Endothelial cell of umbilical vein (primary cell): ENCODE measurements at regions of chr1 and their contacts with region 1.

Region 1: DNA sequence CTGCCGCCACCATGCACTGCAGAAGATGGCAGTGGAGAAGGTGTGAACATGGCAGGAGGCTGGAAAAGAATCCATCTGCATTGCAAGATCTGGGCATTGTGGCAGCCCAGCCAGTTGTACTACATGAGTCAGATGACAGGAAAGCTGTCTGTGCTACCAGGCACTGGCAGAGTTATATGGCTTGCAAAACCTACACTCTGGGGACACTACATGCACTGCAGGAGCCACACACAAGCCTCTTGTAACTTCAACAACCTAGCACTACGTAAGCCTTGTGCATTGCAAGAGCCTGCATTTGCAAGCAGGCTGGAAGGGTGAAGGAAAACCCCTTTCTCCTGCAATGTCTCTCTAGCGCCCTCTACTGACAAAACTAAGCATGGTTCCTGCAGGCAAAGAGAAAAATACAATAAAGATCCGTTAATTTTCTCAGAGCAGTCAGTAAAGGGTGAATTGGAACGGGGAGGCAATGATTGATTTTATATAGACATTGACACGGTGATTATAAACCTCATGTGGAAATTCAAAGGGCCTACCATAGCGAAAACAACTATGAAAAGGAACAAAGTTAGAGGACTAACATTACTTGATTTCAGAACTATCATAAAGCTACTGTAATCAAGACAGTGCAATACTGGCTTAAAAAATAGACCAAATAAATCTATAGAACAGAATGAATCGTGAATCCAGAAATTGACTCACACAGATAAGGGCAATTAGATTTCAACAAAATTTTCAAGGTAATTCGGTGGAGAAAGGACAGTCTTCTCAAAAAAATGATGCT is 26.2 kb upstream of the DYNLT5 start:
- DNase-seq: peak; percentile 82
- H3K4me3 ChIP-seq: no peak overlapping the region
- H3K27ac ChIP-seq: no peak overlapping the region
- H3K4me1 ChIP-seq: peaks cover 31% of the 10 kb centered on the region
- H3K27me3 ChIP-seq: no peaks in the 10 kb centered on the region
- CTCF ChIP-seq: peak; percentile 83 to 84
- POLR2A ChIP-seq: no peak

Region 2: GRCh38 chr1:65958561-65959350 is 767.3 kb before region 1 on chr1:
- CTCF ChIA-PET with region 1: no interaction called
- POLR2A ChIA-PET with region 1: no interaction called
- dilution Hi-C with region 1: no loop called
- intact Hi-C with region 1: loop called (anchors 5 kb)
- DNase-seq: peak; percentile 73
- H3K4me3 ChIP-seq: no peak overlapping the region
- H3K27ac ChIP-seq: no peak overlapping the region
- H3K4me1 ChIP-seq: peaks cover 10% of the 10 kb centered on the region
- H3K27me3 ChIP-seq: no peaks in the 10 kb centered on the region
- CTCF ChIP-seq: peak; percentile 21 to 29
- POLR2A ChIP-seq: no peak

Region 3: DNA sequence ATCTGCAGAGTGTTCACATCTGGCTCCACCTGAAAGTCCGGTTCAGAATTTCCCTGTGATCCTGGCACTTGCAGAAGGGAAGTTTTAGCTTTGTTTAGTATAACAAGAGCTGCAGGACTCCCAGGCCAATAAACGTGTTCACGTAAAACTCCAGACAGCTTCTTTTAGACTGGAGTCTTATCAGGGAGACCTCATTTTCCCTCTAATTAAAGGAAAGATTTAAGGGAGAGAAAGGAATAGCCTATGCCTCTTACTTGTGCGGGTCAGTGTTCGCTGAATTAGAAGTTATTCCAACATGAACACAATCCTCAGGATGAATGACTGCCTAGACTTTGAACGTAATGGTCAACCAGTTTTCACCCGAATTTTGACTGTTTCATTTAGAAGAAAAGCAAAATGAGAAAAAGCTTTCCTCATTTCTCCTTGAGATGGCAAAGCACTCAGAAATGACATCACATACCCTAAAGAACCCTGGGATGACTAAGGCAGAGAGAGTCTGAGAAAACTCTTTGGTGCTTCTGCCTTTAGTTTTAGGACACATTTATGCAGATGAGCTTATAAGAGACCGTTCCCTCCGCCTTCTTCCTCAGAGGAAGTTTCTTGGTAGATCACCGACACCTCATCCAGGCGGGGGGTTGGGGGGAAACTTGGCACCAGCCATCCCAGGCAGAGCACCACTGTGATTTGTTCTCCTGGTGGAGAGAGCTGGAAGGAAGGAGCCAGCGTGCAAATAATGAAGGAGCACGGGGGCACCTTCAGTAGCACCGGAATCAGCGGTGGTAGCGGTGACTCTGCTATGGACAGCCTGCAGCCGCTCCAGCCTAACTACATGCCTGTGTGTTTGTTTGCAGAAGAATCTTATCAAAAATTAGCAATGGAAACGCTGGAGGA is 394.2 kb before region 1 on chr1:
- CTCF ChIA-PET with region 1: no interaction called
- POLR2A ChIA-PET with region 1: no interaction called
- dilution Hi-C with region 1: no loop called
- intact Hi-C with region 1: loop called (anchors 1 kb)
- DNase-seq: peak; percentile 97
- H3K4me3 ChIP-seq: peak overlapping the region; percentile 77 to 98 (median 92)
- H3K27ac ChIP-seq: peak overlapping the region; percentile 95
- H3K4me1 ChIP-seq: peaks cover 30% of the 10 kb centered on the region
- H3K27me3 ChIP-seq: no peaks in the 10 kb centered on the region
- CTCF ChIP-seq: peak; percentile 21 to 57
- POLR2A ChIP-seq: peak; percentile 97

Region 4: DNA sequence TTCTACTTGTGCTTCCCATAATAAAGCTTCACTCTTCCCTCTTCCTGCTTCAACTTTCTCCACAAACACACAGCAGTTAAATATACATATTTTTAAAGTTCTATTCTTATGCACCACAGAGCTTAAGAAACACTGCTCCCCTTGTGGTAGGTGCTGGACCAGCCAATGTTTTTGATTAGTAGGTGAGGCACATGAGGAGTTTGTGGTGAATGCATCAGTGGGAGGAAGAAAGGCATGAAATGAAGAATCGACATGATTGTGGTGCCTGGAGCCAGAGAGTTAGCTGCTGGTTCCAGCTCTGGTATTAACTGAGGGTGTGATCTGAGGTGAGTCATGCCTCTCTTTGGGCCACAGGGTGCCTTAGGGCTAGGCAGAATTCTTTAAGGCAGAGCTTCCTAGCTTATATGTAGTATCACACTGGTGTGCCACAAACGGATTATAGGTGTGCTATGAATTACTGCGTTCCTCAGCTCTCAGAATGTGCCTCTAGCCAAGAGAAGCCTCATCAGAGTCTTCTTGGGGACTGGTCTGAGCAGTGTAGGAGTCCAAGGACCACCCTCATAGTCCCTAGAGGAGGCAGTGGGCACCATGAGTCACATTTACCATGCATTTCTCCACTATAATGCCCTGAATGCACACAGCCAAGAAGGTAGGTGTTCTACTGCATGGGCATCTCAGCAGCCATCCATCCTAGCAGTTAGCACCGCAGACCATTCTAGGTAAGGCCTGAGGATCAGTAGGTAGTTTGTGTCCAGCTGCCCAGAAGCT is 289.5 kb before region 1 on chr1:
- CTCF ChIA-PET with region 1: no interaction called
- POLR2A ChIA-PET with region 1: no interaction called
- dilution Hi-C with region 1: no loop called
- intact Hi-C with region 1: loop called (anchors 2 kb)
- DNase-seq: peak; percentile 46
- H3K4me3 ChIP-seq: no peak overlapping the region
- H3K27ac ChIP-seq: no peak overlapping the region
- H3K4me1 ChIP-seq: peaks cover 34% of the 10 kb centered on the region
- H3K27me3 ChIP-seq: no peaks in the 10 kb centered on the region
- CTCF ChIP-seq: peak; percentile 13 to 31
- POLR2A ChIP-seq: no peak

Region 5: DNA sequence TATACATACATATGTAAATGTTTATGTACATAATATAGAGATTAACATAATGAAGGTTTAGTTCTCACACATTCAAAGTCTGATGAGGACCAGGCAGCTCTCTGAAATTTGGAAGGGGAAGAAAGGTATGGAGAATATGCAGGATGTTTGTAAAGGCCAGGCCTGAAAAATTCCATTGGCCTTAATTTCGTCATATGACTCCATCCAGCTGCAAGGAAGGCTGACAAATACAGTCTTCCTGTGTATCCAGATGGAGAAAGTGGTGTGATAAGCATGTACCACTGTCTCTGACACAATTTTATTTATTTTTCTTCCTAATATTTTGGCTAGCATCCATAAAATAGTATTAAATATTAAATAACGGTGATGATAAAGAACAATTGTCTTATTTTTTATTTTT is 198.4 kb before region 1 on chr1:
- CTCF ChIA-PET with region 1: interaction called, 4 read pairs
- POLR2A ChIA-PET with region 1: no interaction called
- dilution Hi-C with region 1: no loop called
- intact Hi-C with region 1: loop called (anchors 1 kb)
- DNase-seq: peak; percentile 91
- H3K4me3 ChIP-seq: no peak overlapping the region
- H3K27ac ChIP-seq: peak overlapping the region; percentile 81
- H3K4me1 ChIP-seq: peaks cover 35% of the 10 kb centered on the region
- H3K27me3 ChIP-seq: no peaks in the 10 kb centered on the region
- CTCF ChIP-seq: no peak
- POLR2A ChIP-seq: peak; percentile 47

Region 6: GRCh38 chr1:66563094-66563800 is 162.8 kb before region 1 on chr1:
- CTCF ChIA-PET with region 1: interaction called, 7 read pairs
- POLR2A ChIA-PET with region 1: no interaction called
- dilution Hi-C with region 1: no loop called
- intact Hi-C with region 1: loop called (anchors 1 kb)
- DNase-seq: peak; percentile 97
- H3K4me3 ChIP-seq: peak overlapping the region in 1 of 3 experiments; percentile 23
- H3K27ac ChIP-seq: peak overlapping the region; percentile 98
- H3K4me1 ChIP-seq: peaks cover 29% of the 10 kb centered on the region
- H3K27me3 ChIP-seq: no peaks in the 10 kb centered on the region
- CTCF ChIP-seq: no peak
- POLR2A ChIP-seq: peak; percentile 53

Region 7: GRCh38 chr1:66752000-66752592 is 26.0 kb after region 1 on chr1 and contains the start of gene DYNLT5:
- CTCF ChIA-PET with region 1: interaction called, 14 read pairs
- POLR2A ChIA-PET with region 1: no interaction called
- dilution Hi-C with region 1: no loop called
- intact Hi-C with region 1: loop called (anchors 1 kb)
- DNase-seq: peak; percentile 72
- H3K4me3 ChIP-seq: peak within 1 kb of the TSS in 2 of 3 experiments; percentile 27 to 41
- H3K27ac ChIP-seq: peak within 1 kb of the TSS; percentile 25
- H3K4me1 ChIP-seq: peaks cover 26% of the 10 kb centered on the region
- H3K27me3 ChIP-seq: no peaks in the 10 kb centered on the region
- CTCF ChIP-seq: peak; percentile 33 to 46
- POLR2A ChIP-seq: no peak
- total RNA-seq, gene DYNLT5: 4.5 and 12.5 TPM in 2 replicates